ENCODE measurements at regions of chr12 and their contacts with region 1.

Region 1: DNA sequence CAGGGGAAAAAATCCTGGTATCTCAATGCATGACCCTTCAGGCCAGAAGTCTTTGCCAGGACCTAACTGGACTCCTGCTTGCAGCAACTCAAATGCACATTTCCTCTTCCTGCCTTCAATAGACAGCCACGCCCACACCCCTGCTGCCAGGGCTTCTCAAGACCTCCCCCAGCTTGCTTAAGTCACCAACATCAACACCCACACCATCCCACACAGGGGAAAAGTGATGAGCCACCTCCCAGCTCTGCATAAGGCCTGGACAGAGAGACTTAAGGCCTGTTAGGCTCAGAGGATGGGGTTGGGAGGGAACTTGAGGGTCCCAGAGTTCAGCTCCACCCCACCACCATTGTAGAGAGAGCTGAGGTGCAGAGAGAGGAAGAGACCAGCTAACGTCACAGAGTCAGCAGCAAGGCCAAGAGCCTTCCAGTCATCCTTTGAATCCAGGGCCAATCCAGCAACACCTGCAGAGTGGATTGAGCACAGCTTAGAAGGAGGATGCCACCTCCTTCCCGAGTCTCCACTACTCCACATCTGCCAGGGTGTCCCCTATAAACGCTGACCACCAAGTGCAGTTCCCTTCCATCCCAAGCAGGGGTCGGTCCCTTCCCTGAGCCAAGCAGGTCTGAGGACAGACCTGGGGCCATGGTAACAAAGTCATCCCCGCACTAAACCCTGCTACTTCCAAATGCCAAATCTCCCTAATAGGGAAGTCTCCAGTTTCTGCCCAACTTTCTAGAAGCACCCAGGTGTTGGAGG is 50.0 kb downstream of the KDM2B start:
- DNase-seq: no peak
- H3K4me3 ChIP-seq: no peak overlapping the region
- H3K27ac ChIP-seq: no peak overlapping the region
- H3K4me1 ChIP-seq: no peaks in the 10 kb centered on the region
- H3K27me3 ChIP-seq: no peaks in the 10 kb centered on the region
- CTCF ChIP-seq: no peak

Region 2: DNA sequence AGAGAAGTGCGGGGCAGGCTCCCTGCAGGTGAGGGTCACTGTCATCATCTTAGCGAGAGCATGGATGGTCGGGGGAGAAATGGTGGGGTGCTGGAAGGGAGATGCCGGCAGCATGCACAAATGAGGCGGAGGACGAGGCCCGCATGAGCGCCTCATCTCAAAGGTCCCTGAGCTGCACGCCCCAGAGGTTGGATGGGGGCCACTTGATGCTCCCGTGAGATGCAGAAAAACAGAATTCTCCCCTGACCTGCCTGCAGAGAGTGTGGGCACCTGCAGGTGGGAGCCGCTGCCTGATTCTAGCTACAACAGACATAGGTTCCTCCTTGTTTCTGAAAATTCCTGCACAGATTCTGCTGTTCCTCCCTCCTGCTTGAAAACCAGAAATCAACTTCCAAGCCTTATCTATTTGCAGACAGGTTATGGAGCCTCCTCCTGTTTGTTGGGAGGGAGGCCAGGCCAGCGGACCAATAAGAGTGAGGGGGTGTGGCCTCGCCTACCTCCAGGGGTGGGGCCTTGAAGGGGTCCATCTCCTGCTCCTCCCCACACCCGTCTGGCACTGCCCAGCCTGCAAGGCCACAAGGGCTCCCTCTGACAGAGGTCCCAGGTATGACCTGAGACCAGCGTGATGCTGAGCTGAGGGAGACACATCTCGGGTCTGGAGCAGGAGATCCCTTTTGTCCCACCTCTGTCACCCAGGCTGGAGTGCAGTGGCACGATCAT is 17.2 kb before region 1 on chr12:
- CTCF ChIA-PET with region 1: no interaction called
- dilution Hi-C with region 1: no loop called
- in situ Hi-C with region 1: no loop called
- intact Hi-C with region 1: no loop called
- DNase-seq: no peak
- H3K4me3 ChIP-seq: no peak overlapping the region
- H3K27ac ChIP-seq: no peak overlapping the region
- H3K4me1 ChIP-seq: no peaks in the 10 kb centered on the region
- H3K27me3 ChIP-seq: no peaks in the 10 kb centered on the region
- CTCF ChIP-seq: no peak

Region 3: DNA sequence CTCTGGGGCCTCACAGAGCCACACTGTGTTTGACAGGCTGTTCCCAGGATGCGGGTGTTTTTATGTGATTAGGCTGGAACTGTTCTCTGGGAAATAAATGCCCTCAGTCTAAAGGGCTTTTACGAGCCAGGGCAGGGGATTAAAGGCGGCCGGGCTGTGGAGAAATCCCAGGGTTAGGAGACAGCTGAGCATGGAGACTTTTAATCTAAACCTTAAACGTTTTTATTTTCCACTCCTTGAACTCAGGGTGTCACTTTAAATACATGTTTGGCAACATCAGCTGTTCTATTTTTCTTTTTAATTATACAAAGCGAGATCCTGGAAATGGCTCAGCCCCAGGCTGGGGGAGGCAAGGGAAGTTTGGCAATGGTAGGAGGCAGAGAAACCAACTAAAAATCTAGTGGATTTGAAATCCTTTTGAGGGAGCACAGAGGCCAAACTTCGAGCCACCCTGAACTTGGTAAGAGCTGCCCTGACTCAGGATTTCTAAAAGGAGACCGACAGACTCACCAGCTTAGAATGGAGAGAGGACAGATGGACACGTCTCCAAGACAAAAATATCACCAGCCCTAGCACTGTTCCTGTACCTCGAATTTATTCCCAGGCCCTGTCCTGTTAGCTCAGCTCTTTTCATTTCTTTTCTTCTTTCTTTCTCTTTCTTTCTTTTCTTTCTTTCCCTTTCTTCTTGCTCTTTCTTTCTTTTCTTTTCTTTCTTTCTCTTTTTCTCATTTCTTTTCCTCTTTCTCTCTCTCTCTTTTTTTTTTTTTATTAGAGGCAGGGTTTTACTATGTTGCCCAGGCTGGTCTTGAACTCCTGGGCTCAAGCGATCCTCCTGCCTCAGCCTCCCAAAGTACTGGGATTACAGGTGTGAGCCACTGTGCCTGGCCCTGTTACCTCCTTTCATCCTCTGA is 79.7 kb after region 1 on chr12:
- CTCF ChIA-PET with region 1: no interaction called
- dilution Hi-C with region 1: loop called (anchors 5 kb)
- in situ Hi-C with region 1: no loop called
- intact Hi-C with region 1: no loop called
- DNase-seq: no peak
- H3K4me3 ChIP-seq: no peak overlapping the region
- H3K27ac ChIP-seq: no peak overlapping the region
- H3K4me1 ChIP-seq: no peaks in the 10 kb centered on the region
- H3K27me3 ChIP-seq: no peaks in the 10 kb centered on the region
- CTCF ChIP-seq: no peak